ENCODE measurements at regions of chr1 and their contacts with region 1.

Region 1: GRCh38 chr1:58903514-58904298 is 119.9 kb upstream of the JUN start:
- DNase-seq: peak; percentile 82
- ATAC-seq: peak; percentile 84
- H3K4me3 ChIP-seq: peak overlapping the region; percentile 63 to 71 (median 66)
- H3K27ac ChIP-seq: peak overlapping the region; percentile 89
- H3K4me1 ChIP-seq: peaks cover 78% of the 10 kb centered on the region
- H3K27me3 ChIP-seq: no peaks in the 10 kb centered on the region
- CTCF ChIP-seq: no peak
- EP300 ChIP-seq: peak; percentile 2 to 52; a peak in 1 of 4 replicates
- POLR2A ChIP-seq: peak; percentile 65 to 90
- RAD21 ChIP-seq: peak; percentile 50; the same call in 1 of the 2 replicates

Region 2: DNA sequence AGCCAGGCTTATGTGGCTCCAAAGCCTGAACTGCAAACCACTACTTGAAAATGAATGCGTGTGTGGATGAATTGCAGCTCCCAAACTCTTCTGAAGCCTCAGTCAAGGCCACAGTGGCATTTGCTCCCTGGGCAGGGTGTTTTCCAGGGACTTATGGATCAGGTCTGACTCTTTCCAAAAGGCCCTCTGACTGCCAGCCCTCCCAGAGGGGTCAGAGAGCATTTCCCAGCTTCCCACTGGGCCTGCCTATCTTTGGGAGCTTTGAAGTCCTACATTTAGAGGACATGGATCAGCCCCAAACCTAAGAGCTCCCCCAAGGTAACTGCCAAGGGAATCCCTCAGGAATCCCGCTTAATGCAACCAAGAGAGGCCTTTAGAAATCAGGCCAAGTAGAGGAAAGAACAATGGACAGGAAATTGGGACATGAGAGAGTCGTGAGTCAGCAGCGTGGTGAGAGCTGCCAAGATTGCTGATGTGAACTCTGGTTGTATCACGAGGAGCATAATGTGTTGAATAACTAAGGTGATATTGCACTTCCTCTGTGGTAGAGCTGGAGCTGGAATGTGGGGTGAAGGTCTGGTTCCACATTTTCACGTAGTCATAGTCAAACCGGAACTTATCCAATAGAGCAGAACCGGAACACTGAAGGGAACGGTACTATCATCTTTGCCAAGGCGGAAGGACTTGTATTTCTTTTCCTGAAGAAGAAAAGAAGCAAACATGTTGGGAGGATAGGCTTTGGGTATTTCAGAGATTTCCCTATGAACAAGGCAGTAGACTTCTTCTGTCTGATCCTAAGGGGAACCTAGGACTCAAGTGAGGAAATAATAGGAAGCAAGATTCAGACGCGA is 20.4 kb before region 1 on chr1:
- CTCF ChIA-PET with region 1: no interaction called
- POLR2A ChIA-PET with region 1: interaction called, 38 read pairs
- in situ Hi-C with region 1: no loop called
- intact Hi-C with region 1: loop called (anchors 1 kb)
- DNase-seq: peak; percentile 93
- ATAC-seq: peak; percentile 50
- H3K4me3 ChIP-seq: 0 out of 6 replicates have a peak overlapping the region, but pooled peaks of 1 of the 3 experiments have one; percentile 18
- H3K27ac ChIP-seq: peak overlapping the region; percentile 77
- H3K4me1 ChIP-seq: peaks cover 76% of the 10 kb centered on the region
- H3K27me3 ChIP-seq: no peaks in the 10 kb centered on the region
- CTCF ChIP-seq: no peak
- EP300 ChIP-seq: peak in 1 of 2 experiments; percentile 78; a peak in 2 of 4 replicates
- POLR2A ChIP-seq: peak in 1 of 2 experiments; percentile 51; a peak in 2 of 4 replicates
- RAD21 ChIP-seq: peak; percentile 31; the same call in 1 of the 2 replicates

Region 3: GRCh38 chr1:59007820-59008598 is 104.3 kb after region 1 on chr1:
- CTCF ChIA-PET with region 1: no interaction called
- POLR2A ChIA-PET with region 1: no interaction called
- in situ Hi-C with region 1: no loop called
- intact Hi-C with region 1: no loop called
- DNase-seq: no peak
- ATAC-seq: no peak
- H3K4me3 ChIP-seq: no peak overlapping the region
- H3K27ac ChIP-seq: no peak overlapping the region
- H3K4me1 ChIP-seq: no peaks in the 10 kb centered on the region
- H3K27me3 ChIP-seq: peaks cover 0 to 7% of the 10 kb centered on the region in 2 experiments; a peak in 1 of 5 replicates
- CTCF ChIP-seq: no peak
- EP300 ChIP-seq: no peak
- POLR2A ChIP-seq: no peak
- RAD21 ChIP-seq: no peak

Region 4: GRCh38 chr1:59057211-59057694 is 153.5 kb after region 1 on chr1:
- CTCF ChIA-PET with region 1: no interaction called
- POLR2A ChIA-PET with region 1: no interaction called
- in situ Hi-C with region 1: no loop called
- intact Hi-C with region 1: loop called (anchors 10 kb)
- DNase-seq: peak; percentile 64
- ATAC-seq: peak; percentile 88
- H3K4me3 ChIP-seq: no peak overlapping the region
- H3K27ac ChIP-seq: no peak overlapping the region
- H3K4me1 ChIP-seq: peaks cover 33% of the 10 kb centered on the region
- H3K27me3 ChIP-seq: peaks cover 5 to 36% of the 10 kb centered on the region in 2 experiments
- CTCF ChIP-seq: no peak
- EP300 ChIP-seq: peak in 1 of 2 experiments; percentile 52; a peak in 2 of 4 replicates
- POLR2A ChIP-seq: no peak
- RAD21 ChIP-seq: no peak